Endothelial cell of umbilical vein (primary cell): ENCODE measurements at regions of chr2 and their contacts with region 1.

Region 1: DNA sequence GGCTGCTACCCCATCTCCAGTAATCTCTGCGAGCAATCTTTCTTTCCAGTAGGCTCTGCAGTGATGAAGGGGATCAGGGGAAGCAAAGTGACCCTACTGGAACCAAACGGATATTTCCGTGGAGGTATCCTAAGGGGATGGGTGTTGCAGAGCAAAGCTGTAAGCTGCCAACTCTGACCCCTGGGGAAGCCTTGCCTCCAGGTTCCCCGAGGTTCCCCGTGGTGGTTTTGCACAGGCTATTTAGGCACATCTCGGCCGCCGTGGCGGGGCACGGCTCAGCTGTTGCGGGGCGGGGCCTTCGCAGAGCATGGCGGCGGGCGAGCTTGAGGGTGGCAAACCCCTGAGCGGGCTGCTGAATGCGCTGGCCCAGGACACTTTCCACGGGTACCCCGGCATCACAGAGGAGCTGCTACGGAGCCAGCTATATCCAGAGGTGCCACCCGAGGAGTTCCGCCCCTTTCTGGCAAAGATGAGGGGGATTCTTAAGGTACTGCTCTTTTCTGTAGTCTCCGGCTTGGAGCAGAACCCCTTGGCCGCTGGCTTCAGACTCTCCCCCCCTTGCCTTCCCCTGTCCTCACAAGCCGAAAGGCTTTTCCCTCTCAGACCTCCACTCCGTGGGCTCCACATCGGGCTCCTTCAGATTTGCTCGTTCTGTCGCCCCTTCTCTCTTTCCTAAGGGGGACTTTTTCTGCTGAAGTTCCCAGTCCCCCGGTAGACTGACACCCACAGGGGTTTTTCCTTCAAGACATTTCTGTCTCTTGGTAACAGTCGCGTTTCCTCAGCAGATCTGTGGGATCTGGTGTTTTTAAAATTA is at the start of gene COMMD1:
- DNase-seq: peak; percentile 82
- H3K4me3 ChIP-seq: peak within 1 kb of the TSS; percentile 56 to 91 (median 66)
- H3K27ac ChIP-seq: peak within 1 kb of the TSS; percentile 8
- H3K4me1 ChIP-seq: peaks cover 9% of the 10 kb centered on the region
- H3K27me3 ChIP-seq: no peaks in the 10 kb centered on the region
- CTCF ChIP-seq: no peak
- POLR2A ChIP-seq: peak; percentile 96
- total RNA-seq, gene COMMD1: 39.5 and 42.0 TPM in 2 replicates

Region 2: GRCh38 chr2:61575447-61575859 is 330.1 kb before region 1 on chr2:
- CTCF ChIA-PET with region 1: no interaction called
- POLR2A ChIA-PET with region 1: no interaction called
- dilution Hi-C with region 1: no loop called
- intact Hi-C with region 1: no loop called
- DNase-seq: no peak
- H3K4me3 ChIP-seq: no peak overlapping the region
- H3K27ac ChIP-seq: no peak overlapping the region
- H3K4me1 ChIP-seq: peaks cover 2% of the 10 kb centered on the region
- H3K27me3 ChIP-seq: no peaks in the 10 kb centered on the region
- CTCF ChIP-seq: no peak
- POLR2A ChIP-seq: no peak

Region 3: GRCh38 chr2:62195421-62196277 is 290.1 kb after region 1 on chr2 and contains the start of gene B3GNT2:
- CTCF ChIA-PET with region 1: no interaction called
- POLR2A ChIA-PET with region 1: no interaction called
- dilution Hi-C with region 1: no loop called
- intact Hi-C with region 1: loop called (anchors 1 kb)
- DNase-seq: peak; percentile 70
- H3K4me3 ChIP-seq: peak within 1 kb of the TSS; percentile 82 to 98 (median 98)
- H3K27ac ChIP-seq: peak within 1 kb of the TSS; percentile 45
- H3K4me1 ChIP-seq: peaks cover 13% of the 10 kb centered on the region
- H3K27me3 ChIP-seq: peaks cover 0 to under 1% of the 10 kb centered on the region in 2 experiments
- CTCF ChIP-seq: no peak
- POLR2A ChIP-seq: peak; percentile 82
- total RNA-seq, gene B3GNT2: 17.8 and 21.2 TPM in 2 replicates